Mammary epithelial cell (primary cell): ENCODE measurements at regions of chr10 and their contacts with region 1.

Region 1: DNA sequence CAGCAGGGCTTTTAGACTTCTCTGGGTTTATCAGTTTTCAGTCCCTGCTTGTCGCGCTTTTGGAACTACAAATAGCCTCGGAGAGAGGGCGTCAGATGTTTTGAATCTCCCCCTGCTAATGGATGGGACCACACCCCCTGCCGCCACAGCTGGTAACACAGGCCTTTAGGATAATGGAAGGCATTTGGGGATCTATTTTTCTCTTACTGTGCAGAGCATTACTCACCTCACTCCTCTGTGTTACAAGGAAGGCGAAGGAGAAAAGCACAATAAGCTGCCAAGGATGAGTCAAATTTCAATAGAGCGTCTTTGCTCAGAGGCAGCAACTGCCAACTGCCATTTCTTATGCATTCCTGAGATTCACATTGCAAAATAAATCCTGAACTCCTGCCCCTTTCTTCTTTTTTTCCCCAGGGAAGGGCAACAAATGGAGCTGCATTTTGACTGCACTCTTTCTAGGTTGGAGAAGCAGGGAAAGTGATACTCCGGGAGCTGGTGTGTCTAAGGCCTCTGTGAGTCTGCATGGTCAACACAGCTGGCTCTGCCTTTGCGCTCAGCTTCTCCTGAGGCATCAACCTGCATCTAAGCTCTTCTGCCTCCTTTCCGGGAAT is 31.5 kb upstream of the SMNDC1 start:
- DNase-seq: peak; percentile 87
- H3K4me3 ChIP-seq: no peak overlapping the region
- H3K27ac ChIP-seq: peak overlapping the region; percentile 13
- H3K4me1 ChIP-seq: peaks cover 16% of the 10 kb centered on the region
- H3K27me3 ChIP-seq: no peaks in the 10 kb centered on the region
- CTCF ChIP-seq: peak in 1 of 2 donors; percentile 23

Region 2: DNA sequence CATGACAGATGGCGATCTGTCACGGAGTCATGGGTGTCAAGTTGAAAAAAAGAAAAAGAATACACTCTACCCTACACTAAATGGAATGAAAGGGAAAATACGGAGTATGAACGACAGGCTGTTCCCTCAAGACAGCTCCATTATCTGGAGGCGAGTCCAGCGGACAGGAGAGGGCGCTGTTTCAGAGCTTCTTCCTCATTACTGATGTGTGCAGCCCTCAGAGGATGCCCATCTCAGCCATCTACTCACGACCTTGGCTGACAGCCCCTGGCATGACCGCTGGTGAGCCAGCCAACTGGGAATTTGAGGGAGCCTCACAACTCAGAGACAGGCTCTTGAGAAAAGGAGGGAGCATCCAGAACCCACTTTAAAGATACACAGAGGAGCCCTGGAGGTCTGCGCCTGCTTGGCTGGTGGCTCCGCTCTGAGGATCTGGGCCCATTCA is 18.1 kb after region 1 on chr10:
- CTCF ChIA-PET with region 1: no interaction called
- dilution Hi-C with region 1: no loop called
- in situ Hi-C with region 1: no loop called
- intact Hi-C with region 1: loop called (anchors 2 kb)
- DNase-seq: peak; percentile 87
- H3K4me3 ChIP-seq: peak overlapping the region; percentile 25 to 33 (median 32)
- H3K27ac ChIP-seq: peak overlapping the region; percentile 99
- H3K4me1 ChIP-seq: peaks cover 59% of the 10 kb centered on the region
- H3K27me3 ChIP-seq: no peaks in the 10 kb centered on the region
- CTCF ChIP-seq: peak; percentile 83 to 86

Region 3: GRCh38 chr10:110430369-110431273 is 94.4 kb after region 1 on chr10:
- CTCF ChIA-PET with region 1: no interaction called
- dilution Hi-C with region 1: loop called (anchors 5 kb)
- in situ Hi-C with region 1: no loop called
- intact Hi-C with region 1: no loop called
- DNase-seq: no peak
- H3K4me3 ChIP-seq: no peak overlapping the region
- H3K27ac ChIP-seq: no peak overlapping the region
- H3K4me1 ChIP-seq: peaks cover 18% of the 10 kb centered on the region
- H3K27me3 ChIP-seq: no peaks in the 10 kb centered on the region
- CTCF ChIP-seq: no peak

Region 4: DNA sequence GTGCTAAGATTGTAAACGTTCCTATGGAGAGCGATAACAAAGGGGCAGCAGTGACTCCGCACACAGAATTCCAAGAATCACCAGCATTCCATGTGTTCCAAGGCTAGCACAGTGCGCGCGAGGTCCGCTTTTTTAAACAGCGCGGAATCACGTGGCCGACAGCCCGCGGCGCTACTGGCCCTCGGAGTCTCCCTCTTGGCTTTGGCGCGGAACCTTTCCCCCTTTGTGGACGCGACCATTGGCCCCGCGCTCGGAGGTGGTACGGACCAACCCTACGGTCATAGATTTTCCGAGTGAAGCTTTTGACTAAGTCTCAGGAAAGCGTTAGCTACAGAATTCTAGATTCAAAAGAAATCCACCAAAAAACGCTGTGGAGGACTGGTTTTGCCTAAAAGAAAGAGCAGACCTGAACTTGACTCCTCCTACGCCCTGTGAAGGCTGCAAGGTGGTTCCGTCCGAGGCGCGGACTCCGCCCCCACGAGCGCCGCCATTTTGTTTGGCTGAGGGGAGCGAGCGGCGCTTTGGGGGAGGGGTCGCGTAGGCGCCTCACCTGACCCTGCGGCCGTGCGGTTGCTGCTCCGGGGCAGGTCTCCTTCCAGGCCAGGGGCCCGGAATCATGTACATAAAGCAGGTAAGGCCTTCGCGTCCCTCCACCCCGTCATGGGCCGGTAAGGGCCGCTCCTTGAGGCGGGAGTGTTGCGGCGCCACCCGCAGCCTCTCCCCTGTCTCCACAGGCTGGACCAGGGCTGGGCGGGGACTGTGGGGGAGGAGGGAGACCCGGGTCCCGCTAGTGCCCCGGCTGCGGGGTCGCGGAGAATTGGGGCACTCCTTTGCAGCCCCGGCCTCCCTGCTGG is 231.2 kb after region 1 on chr10 and contains the start of gene SMC3:
- CTCF ChIA-PET with region 1: interaction called, 4 read pairs
- dilution Hi-C with region 1: loop called (anchors 10 kb)
- in situ Hi-C with region 1: no loop called
- intact Hi-C with region 1: no loop called
- DNase-seq: peak; percentile 91
- H3K4me3 ChIP-seq: peak within 1 kb of the TSS; percentile 63 to 88 (median 88)
- H3K27ac ChIP-seq: peak within 1 kb of the TSS; percentile 98
- H3K4me1 ChIP-seq: no peaks in the 10 kb centered on the region
- H3K27me3 ChIP-seq: no peaks in the 10 kb centered on the region
- CTCF ChIP-seq: no peak
- total RNA-seq, gene SMC3: 10.2 to 34.3 TPM